Vagina (tissue), 2 donors: ENCODE measurements at regions of chr10 and their contacts with region 1.

Region 1: GRCh38 chr10:22643775-22644174 is 70.6 kb downstream of the PIP4K2A start:
- DNase-seq: no peak
- H3K4me3 ChIP-seq: no peak overlapping the region
- H3K27ac ChIP-seq: no peak overlapping the region
- H3K4me1 ChIP-seq: peaks cover 18% of the 10 kb centered on the region
- H3K27me3 ChIP-seq: no peaks in the 10 kb centered on the region
- CTCF ChIP-seq: no peak
- POLR2A ChIP-seq: no peak

Region 2: GRCh38 chr10:20785174-20785573 is 1858.6 kb before region 1 on chr10:
- intact Hi-C with region 1: loop called (anchors 5 kb)
- DNase-seq: no peak
- H3K4me3 ChIP-seq: no peak overlapping the region
- H3K27ac ChIP-seq: no peak overlapping the region
- H3K4me1 ChIP-seq: no peaks in the 10 kb centered on the region
- H3K27me3 ChIP-seq: no peaks in the 10 kb centered on the region
- CTCF ChIP-seq: no peak
- POLR2A ChIP-seq: no peak

Region 3: DNA sequence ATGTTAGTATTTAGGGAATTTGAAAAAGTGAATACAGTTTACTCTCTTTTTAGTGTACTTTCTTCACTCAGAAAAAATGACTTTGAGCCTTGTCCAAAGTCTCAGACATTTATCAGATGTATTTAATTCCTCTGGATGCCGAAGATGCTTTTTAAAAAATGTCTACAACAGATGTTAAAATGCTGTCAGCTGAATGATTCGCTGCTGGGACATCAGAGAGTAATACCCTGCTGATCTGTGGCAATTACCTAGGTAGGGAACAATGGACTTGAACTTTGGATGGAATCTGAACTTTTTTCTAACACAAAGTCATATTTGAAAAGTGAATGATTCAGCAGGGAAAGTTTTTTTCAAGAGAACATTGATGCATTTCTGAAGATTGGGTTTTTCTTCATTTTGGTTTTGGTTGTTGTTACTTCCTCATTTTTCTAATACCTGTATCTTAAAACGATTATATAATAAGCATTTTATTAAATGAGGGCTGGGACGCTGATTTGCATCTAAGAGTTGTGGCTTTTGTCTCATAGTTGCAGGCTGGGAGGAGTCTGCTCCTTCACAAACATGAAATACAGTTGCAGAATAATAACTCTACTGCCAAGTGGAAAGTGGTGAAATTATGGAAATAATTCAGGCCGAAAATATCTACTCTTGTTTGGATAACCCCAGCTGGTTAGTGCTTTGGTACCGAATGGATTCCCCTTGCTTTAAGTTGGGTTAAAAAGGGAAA is 200.4 kb before region 1 on chr10:
- intact Hi-C with region 1: no loop called
- DNase-seq: no peak
- H3K4me3 ChIP-seq: no peak overlapping the region
- H3K27ac ChIP-seq: no peak overlapping the region
- H3K4me1 ChIP-seq: peaks cover 9% of the 10 kb centered on the region
- H3K27me3 ChIP-seq: no peaks in the 10 kb centered on the region
- CTCF ChIP-seq: no peak
- POLR2A ChIP-seq: no peak